ENCODE measurements at regions of chr7 and their contacts with region 1.

Region 1: DNA sequence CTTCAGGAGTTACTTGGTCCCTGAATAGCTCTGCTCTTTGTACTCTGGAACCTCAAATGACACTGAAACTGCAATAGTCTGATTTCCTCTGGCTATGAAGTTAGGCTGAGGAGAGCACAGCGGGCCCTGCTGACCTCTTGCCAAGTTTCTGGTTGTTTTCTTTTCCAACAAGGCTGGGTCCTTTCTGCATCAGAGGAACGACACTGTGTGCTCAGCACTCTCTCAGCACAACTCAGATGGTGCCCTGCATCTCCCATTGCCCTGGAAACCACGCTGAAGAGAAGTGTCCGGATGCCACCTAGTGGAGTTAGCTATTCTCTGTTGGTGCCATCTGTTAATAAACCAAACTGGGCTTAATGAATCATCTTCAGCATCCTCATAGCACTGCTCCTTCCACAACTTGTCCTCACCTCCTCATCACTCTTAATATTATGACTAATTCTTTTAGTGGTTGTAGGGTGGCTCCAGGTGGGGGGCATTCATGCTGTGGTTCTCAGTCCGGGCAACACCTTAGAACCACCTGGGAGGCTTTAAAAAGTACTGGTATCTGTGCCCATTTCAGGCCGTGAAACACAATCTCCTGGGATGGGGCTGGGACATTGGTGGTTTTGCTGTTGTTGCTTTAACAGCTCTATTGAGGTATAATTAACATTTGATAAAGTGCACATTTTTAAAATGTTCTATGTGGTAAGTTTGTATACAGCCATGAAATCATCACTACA is 8.2 kb upstream of the EFCAB10 start:
- DNase-seq: peak; percentile 81
- H3K4me3 ChIP-seq: no peak overlapping the region
- H3K27ac ChIP-seq: no peak overlapping the region
- H3K4me1 ChIP-seq: peaks cover 8% of the 10 kb centered on the region
- H3K27me3 ChIP-seq: no peaks in the 10 kb centered on the region
- CTCF ChIP-seq: peak; percentile 67 to 75
- POLR2A ChIP-seq: no peak

Region 2: GRCh38 chr7:104883718-104884452 is 705.6 kb before region 1 on chr7:
- CTCF ChIA-PET with region 1: interaction called, 28 read pairs
- POLR2A ChIA-PET with region 1: no interaction called
- dilution Hi-C with region 1: no loop called
- intact Hi-C with region 1: loop called (anchors 1 kb)
- DNase-seq: peak; percentile 87
- H3K4me3 ChIP-seq: peak overlapping the region in 1 of 3 experiments; percentile 35
- H3K27ac ChIP-seq: peak overlapping the region; percentile 31
- H3K4me1 ChIP-seq: peaks cover 5% of the 10 kb centered on the region
- H3K27me3 ChIP-seq: peaks cover 2 to 3% of the 10 kb centered on the region in 2 experiments
- CTCF ChIP-seq: peak; percentile 96 to 97
- POLR2A ChIP-seq: no peak

Region 3: GRCh38 chr7:105141068-105141467 is 448.4 kb before region 1 on chr7:
- CTCF ChIA-PET with region 1: interaction called, 5 read pairs
- POLR2A ChIA-PET with region 1: no interaction called
- dilution Hi-C with region 1: no loop called
- intact Hi-C with region 1: loop called (anchors 10 kb)
- DNase-seq: peak; percentile 33
- H3K4me3 ChIP-seq: no peak overlapping the region
- H3K27ac ChIP-seq: no peak overlapping the region
- H3K4me1 ChIP-seq: no peaks in the 10 kb centered on the region
- H3K27me3 ChIP-seq: no peaks in the 10 kb centered on the region
- CTCF ChIP-seq: peak; percentile 20 to 43
- POLR2A ChIP-seq: no peak

Region 4: DNA sequence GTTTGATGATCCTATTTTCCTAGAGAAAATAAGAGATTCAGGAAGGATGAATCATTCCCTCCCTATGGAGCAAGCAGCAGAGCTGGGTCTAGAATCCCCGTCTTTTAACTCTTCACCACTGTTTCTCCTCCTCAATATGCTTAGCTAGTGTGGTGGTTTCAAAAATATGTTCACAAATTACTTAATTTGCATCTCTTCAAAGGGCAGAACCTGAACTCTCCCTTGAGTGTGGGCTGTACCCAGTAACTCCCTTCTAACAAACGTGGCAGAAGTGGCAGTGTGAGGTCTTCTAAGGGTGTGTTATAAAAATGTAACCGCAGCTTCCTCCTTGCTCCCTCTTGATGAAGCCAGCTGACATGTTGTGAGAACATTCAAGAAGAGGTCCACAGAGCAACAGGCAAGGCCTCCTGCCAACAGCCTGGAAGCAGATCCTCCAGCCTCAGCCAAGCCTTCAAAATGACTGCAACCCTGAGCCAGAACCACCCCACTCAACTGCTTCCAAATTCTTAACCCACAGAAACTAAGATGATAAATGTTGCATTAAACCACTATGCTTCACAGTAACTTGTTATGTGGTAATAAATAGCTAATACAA is 237.4 kb before region 1 on chr7:
- CTCF ChIA-PET with region 1: no interaction called
- POLR2A ChIA-PET with region 1: no interaction called
- dilution Hi-C with region 1: no loop called
- intact Hi-C with region 1: loop called (anchors 1 kb)
- DNase-seq: peak; percentile 81
- H3K4me3 ChIP-seq: peak overlapping the region in 1 of 3 experiments; percentile 10
- H3K27ac ChIP-seq: peak overlapping the region; percentile 65
- H3K4me1 ChIP-seq: peaks cover 13% of the 10 kb centered on the region
- H3K27me3 ChIP-seq: no peaks in the 10 kb centered on the region
- CTCF ChIP-seq: no peak
- POLR2A ChIP-seq: no peak

Region 5: GRCh38 chr7:105399043-105399725 is 190.3 kb before region 1 on chr7:
- CTCF ChIA-PET with region 1: interaction called, 32 read pairs
- POLR2A ChIA-PET with region 1: no interaction called
- dilution Hi-C with region 1: no loop called
- intact Hi-C with region 1: loop called (anchors 1 kb)
- DNase-seq: peak; percentile 75
- H3K4me3 ChIP-seq: no peak overlapping the region
- H3K27ac ChIP-seq: no peak overlapping the region
- H3K4me1 ChIP-seq: peaks cover 12% of the 10 kb centered on the region
- H3K27me3 ChIP-seq: no peaks in the 10 kb centered on the region
- CTCF ChIP-seq: peak in 1 of 2 donors; percentile 29
- POLR2A ChIP-seq: no peak

Region 6: DNA sequence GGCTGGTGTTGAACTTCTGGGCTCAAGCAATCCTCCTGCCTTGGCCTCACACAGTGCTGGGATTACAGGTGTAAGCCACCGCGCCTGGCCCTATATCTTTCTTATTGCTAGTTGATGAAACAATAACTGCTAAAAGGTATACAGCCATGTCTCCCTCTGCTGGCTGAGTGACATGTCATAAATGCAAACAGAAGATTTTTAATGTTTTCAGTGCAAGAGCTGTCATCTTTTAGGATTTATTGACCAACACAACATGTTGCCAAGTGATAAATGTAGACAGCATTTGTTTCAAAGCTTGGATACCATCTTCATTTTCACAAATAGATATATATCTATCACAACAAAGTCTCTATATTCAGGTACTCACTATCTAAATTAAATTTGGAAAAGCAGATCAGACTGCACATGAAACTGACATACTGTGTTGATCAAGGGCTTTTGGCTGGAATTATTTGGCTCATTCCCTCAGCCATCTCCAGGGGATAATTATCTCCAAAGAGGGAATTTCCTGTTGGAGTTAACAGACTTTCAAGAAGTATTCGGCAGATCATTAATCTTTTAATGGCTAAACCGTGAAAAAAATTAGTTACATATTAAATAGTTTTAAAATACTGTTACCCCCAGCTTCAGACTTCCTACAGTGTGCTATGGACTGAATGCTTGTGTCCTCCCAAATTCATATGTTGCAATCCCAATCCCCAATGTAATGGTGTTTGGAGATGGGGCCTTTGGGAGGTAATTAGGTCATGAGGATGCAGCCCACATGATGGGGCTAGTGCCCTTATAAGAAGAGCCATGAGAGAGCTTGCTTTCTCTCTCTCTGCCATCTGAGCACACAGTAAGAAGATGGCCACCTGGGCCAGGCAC is 159.5 kb before region 1 on chr7:
- CTCF ChIA-PET with region 1: interaction called, 10 read pairs
- POLR2A ChIA-PET with region 1: no interaction called
- dilution Hi-C with region 1: no loop called
- intact Hi-C with region 1: no loop called
- DNase-seq: peak; percentile 83
- H3K4me3 ChIP-seq: no peak overlapping the region
- H3K27ac ChIP-seq: no peak overlapping the region
- H3K4me1 ChIP-seq: no peaks in the 10 kb centered on the region
- H3K27me3 ChIP-seq: no peaks in the 10 kb centered on the region
- CTCF ChIP-seq: peak; percentile 38 to 44
- POLR2A ChIP-seq: no peak

Region 7: GRCh38 chr7:106285051-106285854 is 695.7 kb after region 1 on chr7:
- CTCF ChIA-PET with region 1: no interaction called
- POLR2A ChIA-PET with region 1: no interaction called
- dilution Hi-C with region 1: no loop called
- intact Hi-C with region 1: no loop called
- DNase-seq: peak; percentile 99
- H3K4me3 ChIP-seq: peak overlapping the region; percentile 56 to 80 (median 72)
- H3K27ac ChIP-seq: peak overlapping the region; percentile 80
- H3K4me1 ChIP-seq: peaks cover 27% of the 10 kb centered on the region
- H3K27me3 ChIP-seq: no peaks in the 10 kb centered on the region
- CTCF ChIP-seq: no peak
- POLR2A ChIP-seq: peak; percentile 93

Measured in endothelial cell of umbilical vein (primary cell).